ENCODE measurements at regions of chr2 and their contacts with region 1.

Region 1: DNA sequence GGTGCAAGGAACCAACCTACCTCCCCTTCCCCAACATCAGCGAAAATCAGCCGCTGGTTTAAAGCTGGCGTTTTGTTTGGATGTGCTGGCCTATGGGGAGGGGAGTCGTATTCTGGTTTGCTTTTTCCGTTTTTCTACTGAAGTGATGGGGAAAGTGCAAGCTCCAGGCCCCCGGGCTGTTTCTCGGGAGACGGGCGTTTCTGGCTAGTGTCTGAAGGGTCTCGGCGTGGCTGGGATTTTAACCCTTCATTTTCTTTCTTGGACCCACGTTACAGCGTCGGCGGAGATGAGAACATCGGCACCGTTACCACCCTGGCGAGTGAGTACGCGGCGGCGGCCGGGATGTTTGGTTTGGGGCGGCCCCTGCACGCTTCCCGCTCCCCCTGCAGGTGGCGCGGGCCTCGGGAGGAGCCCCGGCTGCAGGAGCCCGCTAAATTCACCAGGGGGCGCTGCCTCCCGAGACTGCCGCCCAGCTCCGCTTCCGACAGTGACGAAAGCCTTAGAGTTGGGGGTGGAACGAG is 70.7 kb downstream of the PLB1 start:
- H3K4me3 ChIP-seq: peak overlapping the region; percentile 29
- H3K27ac ChIP-seq: no peak overlapping the region
- H3K4me1 ChIP-seq: no peaks in the 10 kb centered on the region
- CTCF ChIP-seq: peak; percentile 97

Region 2: GRCh38 chr2:28510184-28510583 is 56.4 kb before region 1 on chr2:
- CTCF ChIA-PET with region 1: no interaction called
- POLR2A ChIA-PET with region 1: no interaction called
- H3K4me3 ChIP-seq: no peak overlapping the region
- H3K27ac ChIP-seq: no peak overlapping the region
- H3K4me1 ChIP-seq: no peaks in the 10 kb centered on the region
- CTCF ChIP-seq: no peak

Region 3: DNA sequence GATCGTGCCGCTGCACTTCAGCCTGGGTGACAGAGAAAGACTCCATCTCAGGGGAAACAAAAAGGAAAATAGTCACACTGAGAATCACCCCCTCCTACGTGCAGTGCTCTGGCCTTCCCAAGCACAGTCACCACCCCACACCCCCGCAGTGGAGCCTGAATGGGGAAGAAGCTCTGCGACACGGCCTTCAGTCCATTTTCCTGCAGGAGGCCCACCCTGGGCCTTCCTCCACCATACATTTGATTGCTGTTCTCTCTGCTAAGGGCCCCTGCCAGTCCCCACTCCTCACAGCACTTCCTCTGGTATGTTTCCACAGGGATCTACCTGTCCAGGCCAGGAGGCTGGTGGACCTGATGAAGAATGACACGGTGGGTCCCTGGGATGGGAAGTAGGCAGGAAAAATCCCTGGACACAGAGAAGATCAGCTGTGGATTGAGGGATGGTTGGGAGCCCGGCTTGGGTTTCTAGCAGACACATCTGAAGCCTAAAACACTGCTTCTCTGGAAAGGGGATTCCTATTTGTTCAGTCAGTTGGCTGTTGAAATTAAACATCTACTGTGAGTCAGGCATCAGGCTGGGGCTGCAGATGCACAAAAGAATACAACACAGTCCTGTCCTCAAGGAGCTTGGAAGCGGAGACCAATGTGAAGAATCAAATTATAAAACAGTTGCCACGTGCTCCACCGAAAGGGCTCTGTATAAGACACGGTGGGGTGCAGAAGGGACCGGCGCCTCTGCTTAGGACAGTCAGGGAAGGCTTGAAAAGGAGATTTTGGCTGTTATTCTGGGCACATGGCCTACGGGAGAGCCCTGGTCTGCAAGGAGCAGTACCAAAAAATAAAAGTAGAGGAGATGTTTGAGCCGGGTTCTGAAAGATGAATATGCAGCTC is 11.5 kb after region 1 on chr2:
- CTCF ChIA-PET with region 1: interaction called, 14 read pairs
- POLR2A ChIA-PET with region 1: interaction called, 3 read pairs
- H3K4me3 ChIP-seq: no peak overlapping the region
- H3K27ac ChIP-seq: no peak overlapping the region
- H3K4me1 ChIP-seq: no peaks in the 10 kb centered on the region
- CTCF ChIP-seq: no peak

Region 4: DNA sequence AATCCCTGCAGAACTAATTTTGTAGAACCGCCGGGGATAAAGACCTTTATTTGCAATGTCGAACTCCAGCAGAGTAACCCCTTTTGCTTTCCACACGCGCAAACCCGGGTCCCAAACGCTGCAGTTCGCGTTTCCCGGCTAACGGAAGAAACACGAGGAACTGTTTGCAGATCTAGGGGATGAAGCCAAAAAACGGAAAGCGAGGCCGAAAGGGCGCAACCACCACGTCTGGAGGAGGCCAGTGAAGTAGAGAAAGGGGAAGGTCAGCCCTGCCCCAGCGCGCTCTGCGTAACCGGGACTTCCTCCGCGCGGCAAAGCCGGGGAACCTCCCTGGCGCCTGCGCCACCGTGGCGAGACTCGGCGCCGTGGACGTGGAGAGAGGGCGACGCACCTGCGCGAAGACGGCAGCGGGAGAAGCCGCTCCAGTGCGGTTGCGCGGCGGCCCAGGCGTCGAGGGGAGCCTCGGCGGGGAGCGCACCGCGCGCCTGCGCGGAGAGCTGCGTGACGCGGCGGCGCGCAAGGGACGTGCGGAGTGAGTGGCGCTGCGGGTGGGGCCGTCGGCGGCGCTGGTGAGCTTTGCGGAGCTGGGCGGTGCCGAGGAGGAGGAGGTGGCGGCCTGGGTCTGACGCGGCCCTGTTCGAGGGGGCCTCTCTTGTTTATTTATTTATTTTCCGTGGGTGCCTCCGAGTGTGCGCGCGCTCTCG is 184.8 kb after region 1 on chr2 and contains the start of gene PPP1CB:
- CTCF ChIA-PET with region 1: interaction called, 10 read pairs
- POLR2A ChIA-PET with region 1: interaction called, 6 read pairs
- H3K4me3 ChIP-seq: peak within 1 kb of the TSS; percentile 97
- H3K27ac ChIP-seq: peak within 1 kb of the TSS; percentile 98
- H3K4me1 ChIP-seq: peaks cover 15% of the 10 kb centered on the region
- CTCF ChIP-seq: no peak; the same call in 1 of the 2 replicates

Measured in HEK293 (cell line).